CD14-positive monocyte (primary cell): ENCODE measurements at regions of chr7 and their contacts with region 1.

Region 1: DNA sequence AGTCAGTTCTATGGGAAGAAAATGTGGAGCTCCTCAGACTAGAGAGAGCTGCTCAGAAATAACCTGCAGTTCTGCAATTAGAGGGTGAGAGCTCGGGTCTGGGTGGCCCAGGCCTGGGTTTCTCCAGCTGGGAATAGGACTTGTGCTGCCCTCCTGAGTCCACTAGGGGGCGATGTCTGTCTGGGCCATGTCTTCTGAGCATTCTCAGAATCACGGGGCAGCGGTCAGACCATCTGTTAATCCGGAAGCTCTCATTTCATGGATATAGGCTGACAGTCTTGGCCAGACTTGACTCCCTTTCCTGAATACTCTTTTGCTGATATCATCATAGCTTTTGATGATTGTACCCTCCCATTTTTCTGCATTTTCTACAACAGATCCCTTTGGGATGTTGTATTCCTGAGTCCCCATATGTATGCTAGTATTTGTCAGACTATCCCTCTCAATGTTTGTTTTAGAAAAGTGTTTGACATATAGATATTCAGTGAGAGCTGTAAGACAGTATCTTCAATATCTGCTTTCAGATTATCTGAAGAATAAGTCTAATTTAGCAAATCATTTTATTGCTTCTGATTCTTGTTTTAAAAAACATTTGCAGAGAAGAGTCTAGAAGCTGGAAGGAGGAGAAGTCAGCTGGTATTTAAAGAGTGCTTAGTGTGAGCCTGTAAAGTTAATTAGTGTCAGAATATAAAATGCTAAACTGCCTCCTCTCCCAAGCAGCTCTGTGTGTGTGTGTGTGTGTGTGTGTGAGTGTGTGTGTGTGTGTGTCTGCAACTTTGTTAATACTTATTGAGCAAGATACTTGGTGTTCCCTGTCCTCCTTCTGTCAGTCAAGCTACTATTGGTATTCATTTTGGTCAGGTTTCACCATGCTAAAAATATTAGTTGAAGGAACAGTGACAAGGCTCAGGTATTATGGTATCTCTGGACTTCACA is 38.0 kb downstream of the STARD3NL start:
- DNase-seq: peak; percentile 82 to 91 (median 85)
- H3K4me3 ChIP-seq: no peak overlapping the region
- H3K4me3 Mint-ChIP-seq: peak overlapping the region in 1 of 2 donors; percentile 74
- H3K27ac ChIP-seq: peak overlapping the region in 1 of 2 donors; percentile 41
- H3K27ac Mint-ChIP-seq: peak overlapping the region; percentile 9 to 78 (median 60)
- H3K4me1 ChIP-seq: peaks cover 4 to 10% of the 10 kb centered on the region in 2 donors
- H3K4me1 Mint-ChIP-seq: peaks cover 8% of the 10 kb centered on the region
- H3K27me3 ChIP-seq: no peaks in the 10 kb centered on the region
- H3K27me3 Mint-ChIP-seq: no peaks in the 10 kb centered on the region
- CTCF ChIP-seq: peak; percentile 95

Region 2: DNA sequence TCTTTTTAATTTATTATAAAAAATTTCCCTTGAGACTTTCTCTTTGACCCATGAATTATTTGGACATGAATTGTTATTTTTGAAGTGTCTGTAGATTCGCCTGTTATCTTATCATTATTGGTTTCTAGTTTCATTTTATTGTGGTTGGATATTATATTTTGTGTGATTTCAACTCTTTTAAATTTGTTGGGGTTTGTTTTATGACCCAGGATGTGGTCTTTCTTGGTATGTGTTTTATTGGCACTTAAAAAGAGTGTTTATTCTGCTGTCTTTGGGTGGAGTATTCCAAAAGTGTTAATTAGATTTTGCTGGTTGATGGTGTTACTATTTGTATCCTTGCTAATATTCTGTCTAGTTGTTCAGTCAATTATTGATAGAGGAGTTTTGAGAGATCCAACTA is 583.0 kb before region 1 on chr7:
- intact Hi-C with region 1: no loop called
- DNase-seq: no peak
- H3K4me3 ChIP-seq: no peak overlapping the region
- H3K4me3 Mint-ChIP-seq: no peak overlapping the region
- H3K27ac ChIP-seq: no peak overlapping the region
- H3K27ac Mint-ChIP-seq: no peak overlapping the region
- H3K4me1 ChIP-seq: no peaks in the 10 kb centered on the region
- H3K4me1 Mint-ChIP-seq: peaks cover 3% of the 10 kb centered on the region
- H3K27me3 ChIP-seq: no peaks in the 10 kb centered on the region
- H3K27me3 Mint-ChIP-seq: no peaks in the 10 kb centered on the region
- CTCF ChIP-seq: no peak

Region 3: DNA sequence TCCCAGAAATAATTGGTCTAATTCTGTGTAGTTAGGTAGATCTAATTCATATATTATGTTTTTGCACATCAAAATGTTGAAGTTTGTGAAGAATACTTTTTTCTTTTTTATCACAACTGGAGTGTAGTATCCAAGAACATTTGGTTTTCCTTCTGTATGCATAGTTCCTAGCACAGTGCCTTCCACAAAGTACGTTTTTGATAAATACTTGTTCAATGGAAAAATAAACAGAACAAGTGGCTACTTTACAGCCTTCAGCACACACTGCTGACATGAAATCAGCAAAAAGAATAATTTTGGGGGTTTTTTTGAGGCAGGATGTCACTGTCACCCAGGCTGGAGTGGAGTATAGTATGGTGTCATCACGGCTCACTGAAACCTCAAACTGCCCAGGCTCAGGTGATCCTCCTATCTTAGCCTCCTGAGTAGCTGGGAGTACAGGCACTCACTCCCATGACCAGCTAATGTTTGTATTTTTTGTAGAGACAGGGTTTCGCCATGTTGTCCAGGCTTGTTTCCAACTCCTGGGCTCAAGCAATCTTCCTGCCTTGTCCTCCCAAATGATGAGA is 29.5 kb after region 1 on chr7:
- intact Hi-C with region 1: no loop called
- DNase-seq: no peak
- H3K4me3 ChIP-seq: no peak overlapping the region
- H3K4me3 Mint-ChIP-seq: no peak overlapping the region
- H3K27ac ChIP-seq: no peak overlapping the region
- H3K27ac Mint-ChIP-seq: no peak overlapping the region
- H3K4me1 ChIP-seq: peaks cover 3 to 6% of the 10 kb centered on the region in 2 donors
- H3K4me1 Mint-ChIP-seq: peaks cover 16% of the 10 kb centered on the region
- H3K27me3 ChIP-seq: no peaks in the 10 kb centered on the region
- H3K27me3 Mint-ChIP-seq: no peaks in the 10 kb centered on the region
- CTCF ChIP-seq: no peak

Region 4: DNA sequence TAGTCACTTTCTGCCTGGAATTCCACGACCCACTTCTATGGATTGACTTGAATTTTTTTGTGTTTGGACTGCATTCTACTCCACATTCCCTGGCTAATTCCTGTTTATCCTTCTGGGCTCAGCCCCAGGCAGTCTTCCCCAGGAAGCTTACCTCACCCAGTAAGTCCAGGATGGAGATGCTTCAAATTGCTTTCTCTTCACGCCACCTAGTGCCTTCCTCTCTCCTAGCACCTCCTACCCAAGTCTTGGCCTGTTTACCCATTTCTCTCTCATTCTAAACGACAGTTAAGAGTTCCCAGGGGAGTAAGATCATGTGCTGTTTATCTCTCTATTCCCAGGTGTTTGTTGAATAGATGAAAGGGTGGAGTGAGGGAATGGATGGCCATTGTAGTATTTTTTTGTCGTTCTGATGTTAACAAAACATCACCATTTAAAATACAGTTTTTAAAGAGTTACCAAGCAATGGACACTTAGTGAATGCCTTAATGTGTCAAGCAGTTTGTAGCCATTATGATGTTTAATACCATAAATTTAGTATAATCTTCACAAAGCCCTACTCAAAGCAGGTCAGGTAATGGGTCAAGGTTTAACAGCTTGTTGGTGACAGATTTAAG is 102.9 kb after region 1 on chr7:
- intact Hi-C with region 1: loop called in 1 of 2 experiments (anchors 10 kb)
- DNase-seq: peak in 2 of 3 donors; percentile 33 to 57
- H3K4me3 ChIP-seq: peak overlapping the region in 1 of 3 experiments; percentile 42
- H3K4me3 Mint-ChIP-seq: peak overlapping the region in 1 of 2 donors; percentile 68
- H3K27ac ChIP-seq: peak overlapping the region in 1 of 2 donors; percentile 47
- H3K27ac Mint-ChIP-seq: peak overlapping the region in 6 of 7 donors; percentile 8 to 91 (median 76)
- H3K4me1 ChIP-seq: peaks cover 21% of the 10 kb centered on the region in 2 donors
- H3K4me1 Mint-ChIP-seq: peaks cover 24% of the 10 kb centered on the region
- H3K27me3 ChIP-seq: no peaks in the 10 kb centered on the region
- H3K27me3 Mint-ChIP-seq: peaks cover 0 to 3% (median under 1%) of the 10 kb centered on the region in 3 donors
- CTCF ChIP-seq: peak; percentile 72

Region 5: DNA sequence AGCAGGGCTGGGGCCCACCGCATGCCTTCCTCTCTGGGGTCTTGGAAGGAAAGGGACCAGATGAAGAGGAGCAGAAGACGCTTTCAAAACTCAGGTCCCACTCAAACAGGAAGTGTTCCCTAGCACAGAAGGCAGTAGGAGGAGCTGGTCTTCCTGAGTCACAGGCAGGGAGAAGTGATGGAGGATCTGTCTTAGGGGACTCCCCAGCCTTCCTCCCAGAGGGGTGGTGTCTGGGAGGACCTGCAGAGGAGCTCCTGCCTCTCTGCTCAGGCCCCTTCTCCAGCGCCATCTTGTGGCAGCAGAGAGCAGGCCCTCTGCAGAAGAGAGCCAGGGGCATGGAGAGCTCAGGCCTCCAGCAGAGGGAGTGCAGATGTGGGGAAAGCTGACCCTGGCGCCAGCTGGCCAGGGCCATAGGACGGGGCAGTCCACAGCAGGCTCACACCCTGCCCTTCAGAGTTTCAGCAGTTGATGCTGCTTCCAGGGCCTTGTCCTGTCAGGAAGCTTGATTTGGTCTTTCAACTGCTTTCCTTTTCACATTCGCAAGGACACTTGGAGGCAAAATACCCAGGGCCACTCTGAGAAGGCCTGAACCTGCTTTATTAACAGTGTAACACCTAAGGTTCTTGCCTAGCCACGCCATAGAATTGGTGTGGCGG is 119.6 kb after region 1 on chr7:
- intact Hi-C with region 1: loop called in 1 of 2 experiments (anchors 5 kb)
- DNase-seq: peak; percentile 97 to 100 (median 97)
- H3K4me3 ChIP-seq: peak overlapping the region; percentile 38 to 75 (median 47)
- H3K4me3 Mint-ChIP-seq: peak overlapping the region; percentile 73 to 90
- H3K27ac ChIP-seq: peak overlapping the region; percentile 72 to 88
- H3K27ac Mint-ChIP-seq: peak overlapping the region; percentile 91 to 99 (median 98)
- H3K4me1 ChIP-seq: peaks cover 36 to 41% of the 10 kb centered on the region in 2 donors
- H3K4me1 Mint-ChIP-seq: peaks cover 65% of the 10 kb centered on the region
- H3K27me3 ChIP-seq: no peaks in the 10 kb centered on the region
- H3K27me3 Mint-ChIP-seq: no peaks in the 10 kb centered on the region
- CTCF ChIP-seq: peak; percentile 98

Region 6: GRCh38 chr7:38369816-38370493 is 154.0 kb after region 1 on chr7:
- intact Hi-C with region 1: loop called (anchors 2 to 10 kb)
- DNase-seq: peak; percentile 95 to 99 (median 99)
- H3K4me3 ChIP-seq: peak overlapping the region in 1 of 3 experiments; percentile 29
- H3K4me3 Mint-ChIP-seq: peak overlapping the region in 1 of 2 donors; percentile 65
- H3K27ac ChIP-seq: peak overlapping the region; percentile 76 to 88
- H3K27ac Mint-ChIP-seq: peak overlapping the region; percentile 87 to 99 (median 97)
- H3K4me1 ChIP-seq: peaks cover 33% of the 10 kb centered on the region in 2 donors
- H3K4me1 Mint-ChIP-seq: peaks cover 30% of the 10 kb centered on the region
- H3K27me3 ChIP-seq: no peaks in the 10 kb centered on the region
- H3K27me3 Mint-ChIP-seq: no peaks in the 10 kb centered on the region
- CTCF ChIP-seq: peak; percentile 96